SK-N-SH (cell line): ENCODE measurements at regions of chr3 and their contacts with region 1.

Region 1: GRCh38 chr3:158313338-158313927 is 203.5 kb downstream of the RSRC1 start:
- DNase-seq: peak; percentile 54
- H3K4me3 ChIP-seq: no peak overlapping the region
- H3K27ac ChIP-seq: no peak overlapping the region
- H3K4me1 ChIP-seq: no peaks in the 10 kb centered on the region; a peak in 1 of 4 replicates
- H3K27me3 ChIP-seq: no peaks in the 10 kb centered on the region
- CTCF ChIP-seq: peak; percentile 70
- EP300 ChIP-seq: no peak
- RAD21 ChIP-seq: peak; percentile 84

Region 2: DNA sequence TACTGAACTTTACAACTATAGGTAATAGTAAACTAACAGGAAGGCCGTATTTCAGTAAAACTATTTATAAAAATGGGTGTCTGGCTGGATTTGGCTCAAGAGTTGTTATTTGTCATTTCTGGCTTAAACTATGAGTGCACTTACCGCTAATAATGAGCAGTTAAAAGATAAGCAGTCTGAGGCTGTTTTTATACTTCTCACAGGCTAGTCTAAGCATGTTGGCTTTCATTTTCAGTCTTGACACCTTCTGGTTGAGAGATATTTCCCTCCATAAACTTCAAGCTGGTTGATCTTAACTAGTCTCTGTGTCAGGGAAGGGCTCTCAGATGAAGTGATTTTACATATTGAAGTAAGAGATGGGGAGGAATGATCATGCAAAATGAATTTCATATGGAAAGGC is 107.4 kb before region 1 on chr3:
- CTCF ChIA-PET with region 1: no interaction called
- POLR2A ChIA-PET with region 1: no interaction called
- DNase-seq: no peak
- H3K4me3 ChIP-seq: no peak overlapping the region
- H3K27ac ChIP-seq: no peak overlapping the region
- H3K4me1 ChIP-seq: no peaks in the 10 kb centered on the region
- H3K27me3 ChIP-seq: no peaks in the 10 kb centered on the region
- CTCF ChIP-seq: no peak
- EP300 ChIP-seq: no peak
- RAD21 ChIP-seq: no peak

Region 3: GRCh38 chr3:158403013-158403412 is 89.6 kb after region 1 on chr3:
- CTCF ChIA-PET with region 1: interaction called, 11 read pairs
- POLR2A ChIA-PET with region 1: interaction called, 4 read pairs
- DNase-seq: peak; percentile 21
- H3K4me3 ChIP-seq: no peak overlapping the region
- H3K27ac ChIP-seq: peak overlapping the region in 1 of 2 experiments; percentile 98; a peak in 2 of 4 replicates
- H3K4me1 ChIP-seq: peaks cover 0 to 21% of the 10 kb centered on the region in 2 experiments; a peak in 2 of 4 replicates
- H3K27me3 ChIP-seq: no peaks in the 10 kb centered on the region
- CTCF ChIP-seq: no peak
- EP300 ChIP-seq: peak in 1 of 2 experiments; percentile 83; a peak in 2 of 4 replicates
- RAD21 ChIP-seq: no peak